HEK293T (cell line): ENCODE measurements at regions of chr1 and their contacts with region 1.

Region 1: DNA sequence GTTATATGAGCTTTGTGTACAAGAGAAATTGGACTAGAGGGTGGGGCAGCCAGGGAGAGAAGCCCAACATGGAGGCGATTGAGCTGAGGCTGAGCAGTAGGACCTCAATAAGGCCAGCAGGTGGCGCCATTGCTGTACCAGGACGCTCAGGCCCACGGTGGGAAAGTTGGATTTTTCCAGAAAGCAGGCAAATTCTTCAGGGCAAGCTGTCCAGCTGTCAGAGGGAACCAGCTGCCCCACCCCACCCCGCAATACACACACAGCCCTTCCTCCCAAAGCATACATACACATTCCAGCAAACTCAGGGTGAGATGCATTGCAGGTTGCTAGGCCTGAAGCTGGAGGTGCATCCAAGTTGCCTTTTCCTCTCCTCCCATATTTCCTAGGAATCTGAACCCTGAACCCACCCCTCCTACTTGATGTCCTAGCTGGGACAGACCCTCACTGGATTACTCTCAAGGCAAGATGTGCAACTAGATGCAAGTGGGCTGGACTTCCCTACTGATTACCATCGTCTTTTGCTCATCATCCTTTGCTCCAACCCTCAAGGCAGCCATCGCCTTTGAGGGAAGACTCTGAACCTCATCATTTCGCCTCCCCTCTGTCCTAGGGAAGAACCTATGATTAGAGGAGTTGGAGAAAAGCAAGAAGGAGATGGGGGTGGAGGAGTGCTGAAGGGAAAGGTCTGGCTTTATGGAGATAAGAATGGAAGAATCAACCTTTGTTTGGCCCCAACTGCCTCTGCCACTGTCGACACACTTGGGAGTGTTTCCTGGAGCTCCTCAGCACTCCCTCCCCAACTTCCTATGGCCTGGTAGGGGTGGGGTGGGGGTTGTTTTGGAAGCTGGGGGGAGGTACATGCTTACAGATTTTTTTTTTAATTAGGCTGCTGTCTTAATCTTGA is 25.5 kb downstream of the CD34 start:
- DNase-seq: peak; percentile 89

Region 2: DNA sequence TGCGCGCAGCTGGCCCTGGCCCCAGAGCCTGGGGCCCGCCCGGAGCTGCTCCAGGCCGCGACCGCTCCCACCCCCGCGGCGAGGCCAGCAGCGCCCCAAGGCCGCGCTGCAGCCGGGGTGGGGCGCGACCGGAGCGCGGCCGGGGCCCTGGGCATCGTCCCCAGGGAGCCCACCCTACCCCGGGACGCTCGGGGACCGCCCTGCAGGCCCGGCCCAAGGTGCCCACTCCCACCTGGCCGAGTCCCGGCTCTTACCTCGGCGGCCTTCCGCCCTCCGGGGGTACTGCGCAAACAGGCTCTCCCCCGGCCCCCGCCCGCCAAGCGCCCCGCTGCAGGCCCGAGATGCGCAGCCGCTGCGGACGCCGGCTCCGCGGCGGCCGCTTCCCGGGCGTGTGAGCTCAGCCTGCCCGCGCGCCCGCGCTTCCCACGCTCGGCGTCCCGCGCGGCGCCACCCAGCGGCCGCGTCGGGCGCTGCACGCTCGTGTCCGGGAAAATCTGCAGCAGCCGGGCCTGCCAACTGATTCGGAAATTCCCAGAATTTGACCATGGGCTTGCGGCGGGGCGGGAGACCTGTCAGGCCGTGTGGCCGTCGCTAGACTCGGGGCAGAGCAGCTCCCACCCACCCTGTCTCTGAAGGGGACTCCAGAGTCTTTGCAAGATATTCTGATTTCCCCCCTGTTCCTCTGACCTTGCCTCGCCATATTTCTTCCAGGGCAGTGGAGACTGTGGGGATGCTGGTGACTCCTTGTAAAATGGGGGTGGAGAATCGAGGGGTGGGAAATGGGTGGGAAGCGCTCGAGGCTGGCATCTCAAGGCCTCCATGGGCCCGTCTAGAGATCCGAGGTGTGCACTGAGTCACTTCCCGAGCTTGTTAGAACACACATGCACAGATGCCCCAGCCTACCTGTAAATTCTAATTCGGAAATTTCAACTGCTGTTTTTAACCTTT is 16.3 kb before region 1 on chr1:
- CTCF ChIA-PET with region 1: interaction called, 25 read pairs
- POLR2A ChIA-PET with region 1: interaction called, 5 read pairs
- DNase-seq: peak; percentile 95

Region 3: GRCh38 chr1:207963427-207964194 is 78.2 kb after region 1 on chr1:
- CTCF ChIA-PET with region 1: interaction called, 29 read pairs
- POLR2A ChIA-PET with region 1: interaction called, 8 read pairs
- DNase-seq: peak; percentile 99

Region 4: GRCh38 chr1:207997486-207998268 is 112.3 kb after region 1 on chr1:
- CTCF ChIA-PET with region 1: interaction called, 10 read pairs
- POLR2A ChIA-PET with region 1: no interaction called
- DNase-seq: peak; percentile 84